Activated CD4-positive, alpha-beta memory T cell treated with anti-CD3 and anti-CD28 coated beads for 36 hours (primary cell): ENCODE measurements at regions of chr10 and their contacts with region 1.

Region 1: DNA sequence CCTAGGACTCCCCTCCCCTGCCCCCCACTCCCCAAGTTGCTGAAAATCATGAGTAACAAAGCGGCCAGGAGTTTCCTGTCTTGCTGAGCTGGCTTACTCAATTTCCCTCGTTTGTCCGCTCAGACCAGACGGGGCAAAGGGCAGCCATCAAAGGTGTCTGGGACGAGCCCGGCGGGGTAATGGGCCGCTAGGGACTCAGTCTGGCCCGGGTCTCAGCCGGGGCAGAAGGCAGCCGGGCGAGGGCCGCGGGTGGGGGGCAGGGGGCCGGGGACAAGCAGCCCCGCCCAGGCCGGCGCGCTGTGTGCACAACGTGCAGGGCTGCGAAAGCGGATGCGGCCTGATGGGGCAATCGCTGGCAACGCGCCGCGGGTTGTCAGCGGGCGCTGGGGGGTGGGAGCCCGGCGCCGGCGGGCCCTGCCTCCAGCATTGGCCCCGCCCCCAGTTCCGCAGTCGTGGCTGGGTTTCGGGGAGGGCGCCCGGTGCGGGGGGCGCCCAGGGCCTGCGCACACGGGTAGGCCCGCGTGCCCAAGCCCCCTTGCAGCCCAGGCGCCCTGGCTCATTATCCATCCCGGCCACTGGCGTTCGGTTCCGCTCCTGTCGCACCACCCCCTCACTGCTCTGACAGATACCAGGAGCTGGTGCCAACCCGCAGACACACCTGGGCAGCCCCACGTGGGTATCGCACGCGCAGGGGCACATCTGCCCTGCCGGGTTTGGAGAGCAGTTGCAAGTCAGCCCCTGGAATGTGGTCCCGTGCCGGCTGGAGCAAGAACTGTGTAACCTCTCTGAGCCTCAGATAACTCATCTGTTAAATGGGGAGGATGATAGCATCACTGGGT is 35.1 kb downstream of the DNAJB12 start:
- DNase-seq: peak; percentile 93
- H3K4me3 Mint-ChIP-seq: peak overlapping the region; percentile 85
- H3K27ac Mint-ChIP-seq: peak overlapping the region; percentile 100
- H3K4me1 Mint-ChIP-seq: peaks cover 79% of the 10 kb centered on the region
- H3K27me3 Mint-ChIP-seq: no peaks in the 10 kb centered on the region

Region 2: DNA sequence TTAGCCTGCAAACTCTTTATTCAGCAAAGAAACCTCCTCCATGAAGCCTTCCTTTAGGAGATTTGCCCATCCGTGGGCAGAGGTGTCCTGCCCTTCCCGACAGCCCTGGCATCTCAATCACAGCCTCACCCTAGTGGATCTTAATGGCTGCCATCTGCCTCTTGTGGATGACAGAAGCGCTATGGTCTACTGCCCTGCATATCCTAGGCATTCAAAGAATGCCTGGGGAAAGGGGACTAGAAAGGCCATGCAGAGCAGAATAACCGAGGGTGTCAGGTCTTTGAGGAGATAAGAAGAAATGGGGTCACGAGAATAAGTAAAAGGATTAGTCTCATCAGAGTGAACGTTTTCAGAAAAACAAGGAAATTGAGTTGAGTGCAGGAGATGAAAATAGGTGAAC is 173.6 kb before region 1 on chr10:
- CTCF ChIA-PET with region 1: no interaction called
- POLR2A ChIA-PET with region 1: no interaction called
- intact Hi-C with region 1: no loop called
- DNase-seq: no peak
- H3K4me3 Mint-ChIP-seq: no peak overlapping the region
- H3K27ac Mint-ChIP-seq: no peak overlapping the region
- H3K4me1 Mint-ChIP-seq: peaks cover 14% of the 10 kb centered on the region
- H3K27me3 Mint-ChIP-seq: no peaks in the 10 kb centered on the region

Region 3: GRCh38 chr10:72308320-72308987 is 11.2 kb before region 1 on chr10:
- CTCF ChIA-PET with region 1: interaction called, 15 read pairs
- POLR2A ChIA-PET with region 1: interaction called, 85 read pairs
- intact Hi-C with region 1: loop called (anchors 1 kb)
- DNase-seq: peak; percentile 70
- H3K4me3 Mint-ChIP-seq: no peak overlapping the region
- H3K27ac Mint-ChIP-seq: peak overlapping the region; percentile 85
- H3K4me1 Mint-ChIP-seq: peaks cover 65% of the 10 kb centered on the region
- H3K27me3 Mint-ChIP-seq: no peaks in the 10 kb centered on the region

Region 4: GRCh38 chr10:72386916-72387586 is 67.4 kb after region 1 on chr10:
- CTCF ChIA-PET with region 1: no interaction called
- POLR2A ChIA-PET with region 1: no interaction called
- intact Hi-C with region 1: no loop called
- DNase-seq: no peak
- H3K4me3 Mint-ChIP-seq: no peak overlapping the region
- H3K27ac Mint-ChIP-seq: no peak overlapping the region
- H3K4me1 Mint-ChIP-seq: no peaks in the 10 kb centered on the region
- H3K27me3 Mint-ChIP-seq: no peaks in the 10 kb centered on the region

Region 5: DNA sequence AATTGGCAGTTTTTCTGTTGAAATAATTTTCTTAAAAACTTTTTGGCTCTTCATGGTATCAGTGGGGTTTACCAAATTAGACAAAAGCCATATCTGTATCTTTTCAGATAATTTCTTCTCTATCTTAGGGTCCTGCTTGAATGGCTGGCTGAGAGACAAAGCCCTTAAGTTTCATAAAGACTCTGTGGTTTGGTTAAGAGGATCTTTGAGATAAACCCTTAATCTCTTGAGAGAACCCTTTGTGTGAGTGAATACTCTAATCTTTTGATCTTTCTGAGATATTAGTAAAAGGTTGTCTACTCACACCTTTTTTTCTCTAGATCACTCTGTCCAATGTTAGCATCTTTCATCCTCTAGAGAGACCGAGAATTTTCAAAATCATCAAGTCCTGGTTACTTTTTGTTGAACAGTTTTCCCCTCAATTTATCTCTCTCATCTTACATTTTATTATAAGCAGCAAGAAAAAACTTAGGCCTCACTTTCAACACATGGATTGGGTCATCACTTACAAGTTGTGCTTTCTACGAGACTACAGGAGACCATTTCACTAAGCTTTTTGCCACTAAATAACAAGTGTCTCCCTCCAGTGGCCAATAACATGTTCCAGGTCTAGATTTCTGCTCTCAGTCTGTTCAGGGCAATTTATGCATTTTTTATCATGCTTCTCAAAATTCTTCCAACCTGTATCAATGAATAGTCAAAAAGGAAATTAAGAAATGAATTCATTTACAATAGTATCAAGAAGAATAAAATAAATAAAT is 899.0 kb after region 1 on chr10:
- CTCF ChIA-PET with region 1: no interaction called
- POLR2A ChIA-PET with region 1: no interaction called
- intact Hi-C with region 1: no loop called
- DNase-seq: no peak
- H3K4me3 Mint-ChIP-seq: no peak overlapping the region
- H3K27ac Mint-ChIP-seq: no peak overlapping the region
- H3K4me1 Mint-ChIP-seq: no peaks in the 10 kb centered on the region
- H3K27me3 Mint-ChIP-seq: no peaks in the 10 kb centered on the region